ENCODE measurements at regions of chr7 and their contacts with region 1.

Region 1: GRCh38 chr7:108525985-108526767 is at the start of gene PNPLA8:
- DNase-seq: peak; percentile 100
- H3K4me3 ChIP-seq: peak within 1 kb of the TSS; percentile 58 to 95 (median 78)
- H3K27ac ChIP-seq: peak within 1 kb of the TSS; percentile 97 to 100 (median 99)
- H3K4me1 ChIP-seq: peaks cover 14 to 40% (median 20%) of the 10 kb centered on the region in 4 donors
- H3K27me3 ChIP-seq: no peaks in the 10 kb centered on the region
- CTCF ChIP-seq: no peak
- EP300 ChIP-seq: peak; percentile 91
- POLR2A ChIP-seq: peak; percentile 98
- total RNA-seq, gene PNPLA8: 4.8 to 41.9 (median 18.5) TPM

Region 2: DNA sequence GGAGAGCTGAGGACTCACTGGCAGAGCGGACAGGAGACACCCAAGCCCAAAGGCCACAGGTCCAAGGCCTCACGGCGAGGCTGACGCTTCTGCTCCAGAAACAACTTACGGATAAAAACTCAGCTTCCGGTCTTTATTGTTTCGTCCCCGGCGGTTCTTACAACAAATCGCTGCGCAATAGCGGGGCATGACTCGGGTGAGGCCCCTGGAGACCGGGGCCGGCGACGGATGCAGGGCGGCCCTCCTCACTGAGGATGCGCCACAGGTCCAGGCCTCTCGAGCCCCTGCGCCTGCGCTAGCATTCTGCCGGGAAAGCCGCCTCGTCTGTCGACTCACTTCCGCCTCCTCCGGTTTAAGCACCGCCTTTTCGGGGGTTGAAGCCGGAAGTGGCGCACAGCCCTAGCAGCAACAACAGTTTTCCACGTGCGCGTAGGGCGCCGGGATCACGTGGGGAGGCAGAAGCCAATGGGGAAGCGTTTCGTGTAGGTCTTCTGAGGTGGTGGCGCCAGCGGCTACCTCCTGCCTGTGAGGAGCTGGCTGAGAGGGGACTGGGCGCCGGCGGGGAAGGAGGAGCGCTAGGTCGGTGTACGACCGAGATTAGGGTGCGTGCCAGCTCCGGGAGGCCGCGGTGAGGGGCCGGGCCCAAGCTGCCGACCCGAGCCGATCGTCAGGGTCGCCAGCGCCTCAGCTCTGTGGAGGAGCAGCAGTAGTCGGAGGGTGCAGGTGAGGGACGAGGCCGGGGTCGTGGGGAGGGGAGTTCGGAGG is 43.4 kb after region 1 on chr7 and contains the starts of genes DNAJB9 and THAP5:
- in situ Hi-C with region 1: loop called in 1 of 4 experiments (anchors 10 kb)
- intact Hi-C with region 1: loop called (anchors 5 kb)
- DNase-seq: peak; percentile 99
- H3K4me3 ChIP-seq: peak within 1 kb of the TSS; percentile 72 to 92 (median 84)
- H3K27ac ChIP-seq: peak within 1 kb of the TSS; percentile 96 to 98 (median 98)
- H3K4me1 ChIP-seq: peaks cover 6 to 46% (median 28%) of the 10 kb centered on the region in 4 donors
- H3K27me3 ChIP-seq: no peaks in the 10 kb centered on the region
- CTCF ChIP-seq: peak in 1 of 5 experiments; percentile 8
- EP300 ChIP-seq: no peak
- POLR2A ChIP-seq: peak; percentile 97
- total RNA-seq, gene DNAJB9: 2.8 to 28.3 (median 14.4) TPM
- total RNA-seq, gene THAP5: 2.2 to 19.1 (median 12.8) TPM

Measured in transverse colon (tissue), 4 donors.